Heart right ventricle (tissue), 16 donors: ENCODE measurements at regions of chr6 and their contacts with region 1.

Region 1: DNA sequence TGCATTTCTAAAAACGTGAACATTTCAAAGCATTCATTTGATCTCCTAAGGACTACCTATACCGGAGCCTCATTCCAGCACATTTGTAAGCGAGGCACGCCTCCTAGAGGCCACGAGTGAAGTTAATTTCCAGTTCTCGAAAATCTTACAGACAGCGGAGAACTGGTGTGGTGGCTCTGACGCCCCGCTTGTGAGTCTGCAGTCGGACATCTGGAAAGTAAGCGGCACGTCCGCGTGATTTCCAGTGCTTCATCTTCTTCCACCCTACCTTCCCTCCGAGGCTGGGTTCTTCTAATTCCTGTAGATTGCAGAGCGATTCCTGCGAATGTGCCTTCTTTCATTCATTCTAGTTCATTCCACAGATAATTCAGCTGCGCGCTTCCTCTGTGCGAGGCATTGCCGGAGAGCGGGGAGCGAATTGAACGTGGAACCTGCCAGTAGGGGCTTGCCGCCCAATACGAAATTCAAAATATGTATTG is 810 bp upstream of the PRIM2 start:
- DNase-seq: peak; percentile 74 to 80
- ATAC-seq: peak; percentile 91 to 97 (median 94)
- H3K4me3 ChIP-seq: peak overlapping the region; percentile 50 to 94 (median 64)
- H3K27ac ChIP-seq: peak overlapping the region; percentile 14 to 75 (median 56)
- H3K4me1 ChIP-seq: peaks cover 4 to 28% (median 17%) of the 10 kb centered on the region in 9 donors
- H3K27me3 ChIP-seq: no peaks in the 10 kb centered on the region
- CTCF ChIP-seq: peak; percentile 58 to 92 (median 81)

Region 2: DNA sequence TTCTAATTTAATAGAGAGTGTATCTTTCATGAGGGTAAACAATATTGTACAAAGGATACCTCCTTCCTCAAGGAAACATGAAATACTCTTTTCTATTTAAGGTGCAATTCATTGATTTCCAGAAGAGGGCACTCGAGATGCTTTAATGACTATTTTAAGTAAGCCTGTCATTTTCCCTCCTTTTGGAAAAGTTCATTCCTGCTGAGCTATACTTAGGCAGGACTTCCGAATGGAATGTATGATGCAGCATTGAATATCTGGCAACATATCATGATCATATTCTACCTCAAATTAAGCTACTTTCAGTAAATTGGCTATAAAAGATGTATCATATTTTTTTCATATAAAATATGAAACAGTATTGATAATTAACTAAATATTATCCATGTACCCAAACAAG is 679.0 kb before region 1 on chr6:
- intact Hi-C with region 1: loop called in 2 of 10 experiments (anchors 10 kb)
- DNase-seq: no peak
- ATAC-seq: peak in 7 of 8 donors; percentile 55 to 71 (median 66)
- H3K4me3 ChIP-seq: no peak overlapping the region
- H3K27ac ChIP-seq: peak overlapping the region in 1 of 10 donors; percentile 55
- H3K4me1 ChIP-seq: peaks cover 0 to 14% (median 3%) of the 10 kb centered on the region in 9 donors
- H3K27me3 ChIP-seq: no peaks in the 10 kb centered on the region
- CTCF ChIP-seq: peak in 8 of 9 donors; percentile 59 to 85 (median 76)

Region 3: DNA sequence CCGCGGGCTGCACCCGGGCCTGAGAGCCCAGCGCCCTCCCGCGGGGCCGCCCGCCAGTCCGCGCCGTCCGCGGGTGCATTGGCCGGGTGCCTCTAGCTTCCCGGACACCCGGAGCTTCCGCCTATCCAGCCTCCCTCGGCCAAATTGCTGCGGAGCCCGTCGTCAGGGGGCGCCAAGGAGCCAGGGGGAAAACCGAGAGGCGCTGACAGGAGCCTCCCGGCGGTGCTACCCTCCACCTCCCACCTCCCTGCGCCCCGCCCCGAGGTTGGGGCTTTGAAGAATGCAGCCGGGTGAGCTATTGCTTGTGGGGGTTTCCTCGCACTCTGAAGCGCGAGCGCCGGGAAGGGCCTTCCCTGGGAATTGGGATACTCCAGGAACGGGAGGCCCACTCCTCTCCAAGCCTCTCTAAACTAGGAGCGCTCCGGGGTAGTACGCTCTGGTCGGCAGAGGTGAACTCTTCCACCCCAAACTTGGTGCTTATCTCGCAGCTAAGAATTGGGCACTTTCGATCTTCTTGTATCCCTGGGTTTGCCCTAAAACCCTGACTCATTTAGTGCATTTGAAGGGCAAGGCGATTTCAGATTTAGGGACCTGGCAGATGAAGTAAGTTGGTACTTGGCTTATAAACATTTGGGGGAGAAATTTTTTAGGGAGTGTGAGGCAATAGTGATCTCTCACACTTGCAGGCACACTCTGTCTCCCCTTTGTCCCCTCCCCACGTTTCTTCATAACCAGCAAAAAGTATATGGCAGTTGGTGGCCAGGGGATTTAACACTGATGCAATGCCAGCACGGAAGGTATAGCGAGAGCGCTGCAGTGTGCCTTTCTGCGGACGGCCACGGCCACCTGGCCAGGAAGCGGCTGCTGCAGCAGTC is 361.2 kb before region 1 on chr6:
- intact Hi-C with region 1: loop called in 2 of 10 experiments (anchors 5 kb)
- DNase-seq: peak; percentile 76 to 81
- ATAC-seq: peak; percentile 43 to 92 (median 84)
- H3K4me3 ChIP-seq: peak overlapping the region; percentile 15 to 65 (median 58)
- H3K27ac ChIP-seq: peak overlapping the region in 2 of 10 donors; percentile 10 to 17
- H3K4me1 ChIP-seq: peaks cover 0 to 27% (median 17%) of the 10 kb centered on the region in 9 donors
- H3K27me3 ChIP-seq: peaks cover 0 to 48% (median 15%) of the 10 kb centered on the region in 7 donors
- CTCF ChIP-seq: peak; percentile 26 to 80 (median 65)

Region 4: GRCh38 chr6:57040009-57040408 is 276.6 kb before region 1 on chr6:
- intact Hi-C with region 1: loop called in 1 of 10 experiments (anchors 10 kb)
- DNase-seq: no peak
- ATAC-seq: no peak
- H3K4me3 ChIP-seq: no peak overlapping the region
- H3K27ac ChIP-seq: no peak overlapping the region
- H3K4me1 ChIP-seq: no peaks in the 10 kb centered on the region
- H3K27me3 ChIP-seq: peaks cover 0 to 36% (median 9%) of the 10 kb centered on the region in 7 donors
- CTCF ChIP-seq: no peak

Region 5: DNA sequence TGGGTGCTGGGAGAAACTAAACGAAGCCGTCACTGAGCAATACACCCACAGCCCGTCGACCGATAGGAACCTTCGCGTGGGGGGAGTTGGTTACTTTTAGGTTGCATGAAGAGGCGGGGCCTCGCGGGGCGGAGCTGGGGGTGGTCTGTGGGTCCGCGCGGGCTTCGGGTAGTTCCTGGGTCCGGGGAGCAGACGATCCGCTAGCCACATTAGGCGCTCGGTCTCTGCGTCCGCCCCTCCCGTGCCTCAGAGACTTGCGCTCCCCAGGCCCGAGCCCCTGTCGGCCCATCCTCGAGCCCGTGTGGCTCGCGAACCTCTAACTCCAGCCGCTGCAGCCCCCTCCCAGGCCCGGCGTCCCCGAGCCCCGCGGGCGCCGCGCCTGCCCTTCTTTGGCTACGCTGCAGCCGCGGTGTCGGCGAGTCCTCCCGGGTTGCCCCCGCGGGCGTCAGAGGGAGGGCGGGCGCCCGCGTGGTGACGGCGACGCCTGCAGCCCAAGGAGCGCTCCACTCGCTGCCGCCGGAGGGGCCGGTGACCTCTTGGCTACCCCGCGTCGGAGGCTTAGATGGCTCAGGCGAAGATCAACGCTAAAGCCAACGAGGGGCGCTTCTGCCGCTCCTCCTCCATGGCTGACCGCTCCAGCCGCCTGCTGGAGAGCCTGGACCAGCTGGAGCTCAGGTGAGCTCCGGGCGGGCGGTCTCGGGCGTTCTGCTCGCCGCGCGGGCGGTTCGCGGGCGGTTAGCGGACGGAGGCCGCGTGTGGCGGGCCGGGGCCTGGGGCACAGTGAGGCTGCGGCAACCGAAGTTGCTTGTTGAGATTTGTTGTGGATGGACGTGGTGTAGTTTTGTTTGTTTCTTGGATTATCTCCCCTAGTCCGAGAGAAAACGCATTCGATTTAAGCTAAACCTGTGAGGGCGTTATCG is 144.2 kb before region 1 on chr6 and contains the start of gene BAG2:
- intact Hi-C with region 1: loop called in 7 of 10 experiments (anchors 5 to 10 kb)
- DNase-seq: peak; percentile 85 to 87
- ATAC-seq: peak; percentile 94 to 98 (median 95)
- H3K4me3 ChIP-seq: peak within 1 kb of the TSS; percentile 57 to 80 (median 76)
- H3K27ac ChIP-seq: peak within 1 kb of the TSS; percentile 88 to 98 (median 91)
- H3K4me1 ChIP-seq: peaks cover 0 to 39% (median 19%) of the 10 kb centered on the region in 9 donors
- H3K27me3 ChIP-seq: no peaks in the 10 kb centered on the region
- CTCF ChIP-seq: peak in 5 of 9 donors; percentile 7 to 46 (median 27)
- total RNA-seq, gene BAG2: 7.2 to 15.6 (median 9.7) TPM

Region 6: DNA sequence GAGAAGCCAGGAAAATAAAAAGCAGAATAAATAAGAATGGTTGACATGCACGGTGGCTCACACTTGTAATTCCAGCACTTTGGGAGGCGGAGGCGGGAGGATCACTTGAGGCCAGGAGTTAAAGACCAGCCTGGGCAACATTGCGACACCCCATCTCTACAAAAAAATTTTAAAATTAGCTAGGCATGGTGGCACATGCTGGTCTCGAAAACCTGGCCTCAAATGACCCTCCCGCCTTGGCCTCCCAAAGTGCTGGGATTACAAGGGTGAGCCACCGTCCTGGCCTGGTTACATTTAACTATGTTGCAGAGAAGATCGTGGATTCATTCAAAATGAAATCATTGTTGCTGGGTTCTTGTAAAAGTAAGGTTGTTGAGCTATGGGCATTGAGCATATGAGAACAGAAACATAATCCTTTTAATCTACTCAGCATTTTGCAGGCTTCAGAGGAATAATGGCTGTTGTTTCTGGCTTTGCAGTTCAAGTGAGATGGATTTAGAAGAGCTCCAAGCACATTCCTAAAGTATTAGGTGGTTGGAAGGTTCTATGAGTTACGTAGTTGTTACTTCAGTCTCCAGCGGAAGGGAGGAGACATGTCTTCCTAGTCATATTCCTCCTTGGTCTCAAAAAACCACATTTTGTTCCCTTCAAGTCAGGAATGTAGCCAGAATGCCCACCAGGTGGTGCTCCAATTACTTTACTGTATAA is 48.9 kb before region 1 on chr6:
- intact Hi-C with region 1: loop called in 1 of 10 experiments (anchors 2 kb)
- DNase-seq: peak in 1 of 2 donors; percentile 25
- ATAC-seq: peak in 6 of 8 donors; percentile 37 to 93 (median 84)
- H3K4me3 ChIP-seq: no peak overlapping the region
- H3K27ac ChIP-seq: peak overlapping the region in 1 of 10 donors; percentile 41
- H3K4me1 ChIP-seq: peaks cover 0 to 20% (median 4%) of the 10 kb centered on the region in 9 donors
- H3K27me3 ChIP-seq: no peaks in the 10 kb centered on the region
- CTCF ChIP-seq: peak in 7 of 9 donors; percentile 21 to 59 (median 50)